ENCODE measurements at regions of chr11 and their contacts with region 1.

Region 1: DNA sequence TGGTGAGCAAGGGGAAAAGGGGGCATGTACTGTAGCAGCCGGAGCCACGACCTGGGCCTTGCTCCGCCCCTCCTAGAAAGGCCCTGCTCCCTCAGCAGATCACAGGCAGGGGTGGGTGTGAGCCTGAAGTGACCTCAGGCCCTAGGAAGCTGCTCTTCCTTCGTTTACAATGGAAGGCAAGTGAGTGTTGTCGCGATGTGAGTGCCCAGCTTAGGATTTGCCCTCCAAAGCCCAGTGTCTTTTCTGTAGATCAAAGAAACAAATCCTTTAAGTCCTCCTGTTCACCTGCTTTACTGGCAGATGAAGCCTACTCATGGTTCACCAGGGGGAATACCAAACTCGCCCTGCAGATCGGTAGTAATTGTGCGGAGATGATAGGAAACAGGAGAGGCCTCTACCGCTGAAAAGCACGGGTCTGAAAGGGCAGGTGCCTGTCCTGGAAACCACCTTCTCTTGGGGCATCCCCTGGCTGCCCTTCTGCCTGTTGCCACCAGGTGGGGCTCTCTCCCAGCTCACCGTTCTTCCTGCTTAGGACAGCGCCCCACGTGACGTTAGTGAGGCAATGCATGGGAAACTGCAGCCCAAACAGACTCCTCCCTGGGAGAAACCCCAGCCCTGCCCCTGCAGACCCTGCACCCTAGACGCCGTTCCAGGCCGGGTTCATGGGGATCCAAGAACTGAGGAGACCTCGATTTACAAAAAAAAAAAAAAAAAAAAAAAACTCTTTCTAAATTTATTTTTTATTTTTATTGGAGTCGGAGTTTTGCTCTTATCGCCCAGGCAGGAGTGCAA is 45.9 kb upstream of the RAB1B start:
- DNase-seq: peak; percentile 93
- ATAC-seq: peak; percentile 95 to 98
- H3K4me3 ChIP-seq: no peak overlapping the region
- H3K27ac ChIP-seq: no peak overlapping the region
- H3K4me1 ChIP-seq: peaks cover 3% of the 10 kb centered on the region
- H3K27me3 ChIP-seq: no peaks in the 10 kb centered on the region
- CTCF ChIP-seq: peak; percentile 99

Region 2: GRCh38 chr11:66264924-66265331 is 42.4 kb after region 1 on chr11:
- intact Hi-C with region 1: loop called (anchors 5 kb)
- DNase-seq: no peak
- ATAC-seq: no peak
- H3K4me3 ChIP-seq: no peak overlapping the region
- H3K27ac ChIP-seq: no peak overlapping the region
- H3K4me1 ChIP-seq: peaks cover 18% of the 10 kb centered on the region
- H3K27me3 ChIP-seq: no peaks in the 10 kb centered on the region
- CTCF ChIP-seq: peak; percentile 12